Caco-2 (cell line): ENCODE measurements at regions of chr5 and their contacts with region 1.

Region 1: GRCh38 chr5:31664566-31664965 is 25.6 kb downstream of the PDZD2 start:
- DNase-seq: peak; percentile 50 to 62
- H3K4me3 ChIP-seq: no peak overlapping the region
- H3K4me3 Mint-ChIP-seq: no peak overlapping the region
- H3K27ac Mint-ChIP-seq: no peak overlapping the region
- H3K4me1 ChIP-seq: no peaks in the 10 kb centered on the region
- H3K4me1 Mint-ChIP-seq: no peaks in the 10 kb centered on the region
- H3K27me3 ChIP-seq: no peaks in the 10 kb centered on the region
- H3K27me3 Mint-ChIP-seq: peaks cover 11% of the 10 kb centered on the region
- CTCF ChIP-seq: peak in 1 of 2 experiments; percentile 41

Region 2: GRCh38 chr5:31463351-31463750 is 201.2 kb before region 1 on chr5:
- CTCF ChIA-PET with region 1: no interaction called
- POLR2A ChIA-PET with region 1: no interaction called
- intact Hi-C with region 1: no loop called
- DNase-seq: no peak
- H3K4me3 ChIP-seq: no peak overlapping the region
- H3K4me3 Mint-ChIP-seq: no peak overlapping the region
- H3K27ac Mint-ChIP-seq: no peak overlapping the region
- H3K4me1 ChIP-seq: no peaks in the 10 kb centered on the region
- H3K4me1 Mint-ChIP-seq: no peaks in the 10 kb centered on the region
- H3K27me3 ChIP-seq: no peaks in the 10 kb centered on the region
- H3K27me3 Mint-ChIP-seq: no peaks in the 10 kb centered on the region
- CTCF ChIP-seq: no peak

Region 3: DNA sequence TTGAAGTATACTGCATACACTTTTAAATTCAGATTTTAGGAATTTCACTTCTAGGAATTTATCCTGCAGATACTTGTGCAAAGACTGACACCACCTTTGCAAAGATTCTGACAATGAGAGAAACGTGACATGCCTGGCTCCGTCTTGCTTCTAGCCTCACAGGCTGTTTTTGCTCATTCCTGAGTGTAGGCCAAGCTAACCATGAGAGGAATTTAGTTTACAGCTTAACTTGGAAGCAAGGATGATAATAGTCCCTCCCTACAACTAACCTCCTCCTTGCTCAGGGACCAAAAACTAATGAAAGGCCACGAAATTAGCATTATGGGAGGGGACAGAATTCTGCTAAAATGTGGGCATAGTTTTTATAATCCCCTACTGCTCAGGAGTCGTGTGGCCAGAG is 101.3 kb before region 1 on chr5:
- CTCF ChIA-PET with region 1: interaction called, 13 read pairs
- POLR2A ChIA-PET with region 1: no interaction called
- intact Hi-C with region 1: no loop called
- DNase-seq: no peak
- H3K4me3 ChIP-seq: no peak overlapping the region
- H3K4me3 Mint-ChIP-seq: no peak overlapping the region
- H3K27ac Mint-ChIP-seq: no peak overlapping the region
- H3K4me1 ChIP-seq: no peaks in the 10 kb centered on the region
- H3K4me1 Mint-ChIP-seq: no peaks in the 10 kb centered on the region
- H3K27me3 ChIP-seq: no peaks in the 10 kb centered on the region
- H3K27me3 Mint-ChIP-seq: no peaks in the 10 kb centered on the region
- CTCF ChIP-seq: no peak

Region 4: DNA sequence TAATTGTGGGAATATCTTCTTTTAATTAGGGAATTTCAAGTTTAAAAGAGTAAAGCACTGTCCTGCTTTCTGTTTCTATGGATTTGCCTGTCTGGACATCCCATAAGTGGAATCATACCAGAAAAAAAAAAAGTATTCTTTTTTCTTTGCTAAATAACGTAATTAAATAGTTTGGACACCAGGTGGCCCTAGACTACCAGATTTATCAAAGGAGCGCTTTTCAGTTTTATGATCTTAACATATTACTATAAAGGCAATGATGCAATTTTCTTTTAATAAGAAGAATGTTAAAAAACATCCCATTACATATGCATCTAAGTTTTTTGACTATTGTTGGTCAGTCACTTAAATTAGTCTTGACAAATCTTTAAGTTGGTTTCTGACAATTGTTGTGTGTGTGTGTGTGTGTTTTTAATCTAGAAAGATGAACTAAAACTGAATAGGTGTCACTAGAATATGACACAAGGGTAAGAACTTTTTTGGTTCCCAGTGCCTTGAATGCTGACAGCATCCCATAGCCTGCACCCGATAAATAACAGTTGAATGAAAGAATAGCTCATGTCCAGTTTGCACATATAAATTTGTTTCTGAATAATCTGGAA is 83.0 kb before region 1 on chr5:
- CTCF ChIA-PET with region 1: no interaction called
- POLR2A ChIA-PET with region 1: no interaction called
- intact Hi-C with region 1: loop called (anchors 2 kb)
- DNase-seq: peak in 1 of 2 experiments; percentile 22
- H3K4me3 ChIP-seq: no peak overlapping the region
- H3K4me3 Mint-ChIP-seq: no peak overlapping the region
- H3K27ac Mint-ChIP-seq: no peak overlapping the region
- H3K4me1 ChIP-seq: no peaks in the 10 kb centered on the region
- H3K4me1 Mint-ChIP-seq: no peaks in the 10 kb centered on the region
- H3K27me3 ChIP-seq: no peaks in the 10 kb centered on the region; the same call in 1 of the 2 replicates
- H3K27me3 Mint-ChIP-seq: peaks cover 23% of the 10 kb centered on the region
- CTCF ChIP-seq: peak; percentile 15 to 74